ENCODE measurements at regions of chr13 and their contacts with region 1.

Region 1: DNA sequence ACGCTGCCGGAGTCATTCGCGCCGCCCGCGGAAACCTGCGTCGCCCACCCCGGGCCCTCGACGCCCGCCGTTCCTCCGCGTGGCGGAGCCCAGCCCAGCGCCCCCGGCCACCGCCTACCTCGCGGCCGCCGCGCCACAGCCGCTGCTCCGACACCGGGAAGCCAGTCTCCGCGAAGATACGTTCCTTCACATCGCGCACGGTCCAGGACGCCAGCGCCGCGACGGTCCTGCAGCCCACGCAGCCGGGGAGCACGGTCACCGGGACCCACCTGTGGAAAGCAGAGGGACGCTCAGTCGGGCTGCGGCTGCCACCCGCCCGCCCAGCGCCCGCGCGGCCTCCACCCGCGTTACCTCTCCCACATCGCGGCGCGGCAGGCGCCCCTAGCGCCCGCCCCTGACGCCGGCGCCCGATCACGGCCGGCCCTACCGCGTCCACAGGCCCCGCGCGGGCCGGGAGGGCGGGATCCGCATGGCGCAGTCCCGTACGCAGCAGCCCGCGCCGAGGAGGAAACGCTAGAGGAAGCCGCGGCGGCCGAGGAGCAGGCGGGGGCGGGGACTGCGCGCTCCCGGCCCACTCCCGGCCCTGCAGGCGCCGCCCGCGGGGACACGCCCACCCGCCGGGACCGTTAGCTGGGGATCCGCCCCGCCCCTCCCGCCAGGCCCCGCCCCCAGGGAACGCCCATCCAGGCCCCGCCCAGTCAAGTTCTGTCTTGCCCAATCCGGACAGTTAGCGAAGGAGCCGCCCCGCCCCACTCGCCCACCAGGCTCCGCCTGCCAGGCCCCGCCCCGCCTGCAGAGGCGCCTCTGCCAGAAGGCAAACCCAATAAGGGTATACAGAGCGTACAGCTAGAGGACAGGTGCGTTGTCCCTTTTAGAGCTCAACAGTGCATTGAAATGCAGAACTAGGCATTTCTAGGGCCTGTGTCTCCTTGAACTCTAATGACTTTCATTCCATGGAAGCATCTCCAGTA is 58.2 kb downstream of the SACS start:
- DNase-seq: peak; percentile 96
- ATAC-seq: peak; percentile 85
- H3K4me3 ChIP-seq: peak overlapping the region in 4 of 5 experiments; percentile 46 to 69 (median 67)
- H3K4me3 Mint-ChIP-seq: peak overlapping the region; percentile 79
- H3K27ac ChIP-seq: peak overlapping the region; percentile 49 to 51
- H3K27ac Mint-ChIP-seq: peak overlapping the region; percentile 86
- H3K4me1 ChIP-seq: peaks cover 56 to 59% of the 10 kb centered on the region in 2 donors
- H3K4me1 Mint-ChIP-seq: peaks cover 64% of the 10 kb centered on the region
- H3K27me3 ChIP-seq: no peaks in the 10 kb centered on the region
- H3K27me3 Mint-ChIP-seq: no peaks in the 10 kb centered on the region
- CTCF ChIP-seq: peak; percentile 59

Region 2: GRCh38 chr13:21603531-21604448 is 1771.5 kb before region 1 on chr13 and contains the start of gene MICU2:
- CTCF ChIA-PET with region 1: no interaction called
- POLR2A ChIA-PET with region 1: no interaction called
- intact Hi-C with region 1: loop called (anchors 5 kb)
- DNase-seq: peak; percentile 98
- ATAC-seq: peak; percentile 93
- H3K4me3 ChIP-seq: peak within 1 kb of the TSS; percentile 59 to 92 (median 75)
- H3K4me3 Mint-ChIP-seq: peak within 1 kb of the TSS; percentile 95
- H3K27ac ChIP-seq: peak within 1 kb of the TSS; percentile 80 to 98
- H3K27ac Mint-ChIP-seq: peak within 1 kb of the TSS; percentile 98
- H3K4me1 ChIP-seq: peaks cover 17 to 21% of the 10 kb centered on the region in 2 donors
- H3K4me1 Mint-ChIP-seq: peaks cover 35% of the 10 kb centered on the region
- H3K27me3 ChIP-seq: peaks cover 2 to 12% (median 3%) of the 10 kb centered on the region in 4 experiments
- H3K27me3 Mint-ChIP-seq: peaks cover 29% of the 10 kb centered on the region
- CTCF ChIP-seq: no peak
- total RNA-seq, gene MICU2: 52.2 and 52.5 TPM in 2 replicates

Region 3: GRCh38 chr13:23411706-23412105 is 36.4 kb after region 1 on chr13:
- CTCF ChIA-PET with region 1: interaction called, 5 read pairs
- POLR2A ChIA-PET with region 1: no interaction called
- intact Hi-C with region 1: loop called (anchors 1 kb)
- DNase-seq: no peak
- ATAC-seq: no peak
- H3K4me3 ChIP-seq: no peak overlapping the region
- H3K4me3 Mint-ChIP-seq: no peak overlapping the region
- H3K27ac ChIP-seq: no peak overlapping the region
- H3K27ac Mint-ChIP-seq: no peak overlapping the region
- H3K4me1 ChIP-seq: no peaks in the 10 kb centered on the region
- H3K4me1 Mint-ChIP-seq: peaks cover 2% of the 10 kb centered on the region
- H3K27me3 ChIP-seq: peaks cover 0 to 6% (median 3%) of the 10 kb centered on the region in 4 experiments
- H3K27me3 Mint-ChIP-seq: peaks cover 14% of the 10 kb centered on the region
- CTCF ChIP-seq: no peak

Region 4: DNA sequence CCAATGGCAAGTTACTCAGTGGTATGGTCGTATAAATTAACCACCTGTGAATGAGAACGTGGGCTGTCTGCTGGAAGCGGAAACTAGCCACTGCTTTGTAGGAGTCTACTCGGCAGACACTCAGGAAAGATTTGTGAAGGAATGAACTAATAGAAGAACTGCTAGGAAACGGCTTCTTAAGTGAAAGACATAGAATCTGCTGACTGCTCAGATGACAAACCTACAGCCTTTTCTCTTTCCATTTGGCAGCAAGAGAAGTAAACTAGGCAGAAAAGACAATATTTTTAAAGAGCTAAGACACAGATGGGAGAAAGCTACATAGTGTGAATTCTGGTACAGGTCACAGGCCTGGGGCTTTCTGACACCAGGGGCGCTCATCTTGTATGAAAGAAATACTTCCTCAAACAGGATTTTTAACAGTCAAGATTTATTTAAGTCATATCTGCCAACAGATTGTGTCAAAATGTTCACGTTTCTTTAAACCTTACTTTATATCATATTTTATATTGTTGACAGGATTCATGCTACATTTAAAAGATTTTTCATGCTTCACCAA is 435.5 kb after region 1 on chr13:
- CTCF ChIA-PET with region 1: no interaction called
- POLR2A ChIA-PET with region 1: no interaction called
- intact Hi-C with region 1: loop called (anchors 2 kb)
- DNase-seq: peak; percentile 67
- ATAC-seq: peak; percentile 56
- H3K4me3 ChIP-seq: no peak overlapping the region
- H3K4me3 Mint-ChIP-seq: peak overlapping the region; percentile 23
- H3K27ac ChIP-seq: peak overlapping the region in 1 of 2 donors; percentile 50
- H3K27ac Mint-ChIP-seq: peak overlapping the region; percentile 43
- H3K4me1 ChIP-seq: peaks cover 54 to 59% of the 10 kb centered on the region in 2 donors
- H3K4me1 Mint-ChIP-seq: peaks cover 43% of the 10 kb centered on the region
- H3K27me3 ChIP-seq: peaks cover 0 to 2% (median 0%) of the 10 kb centered on the region in 4 experiments
- H3K27me3 Mint-ChIP-seq: no peaks in the 10 kb centered on the region
- CTCF ChIP-seq: peak; percentile 79

Region 5: DNA sequence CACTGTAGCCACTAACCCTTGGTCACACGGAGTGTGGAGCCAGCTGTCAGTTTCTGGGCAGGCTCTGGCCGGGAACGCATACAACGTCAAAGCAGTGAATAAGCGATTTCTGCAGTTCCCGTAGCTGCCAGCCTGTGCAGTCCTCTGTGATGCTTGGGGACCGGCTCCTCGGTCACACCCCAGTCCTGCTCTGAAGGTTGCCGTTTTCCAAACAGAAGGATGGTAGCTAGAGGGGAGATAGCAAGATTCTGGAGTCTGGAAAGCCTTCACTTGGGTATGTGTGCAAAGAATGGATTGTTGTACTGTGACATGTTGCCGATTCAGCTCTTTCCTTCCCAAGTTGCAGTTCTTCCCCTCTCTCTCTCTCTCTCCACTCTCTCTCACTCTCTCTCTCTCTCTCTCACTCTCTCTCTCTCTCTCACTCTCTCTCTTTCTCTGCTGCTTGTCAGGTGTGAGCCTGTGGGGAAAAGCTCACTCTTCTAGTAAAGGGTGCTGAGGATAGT is 895.4 kb after region 1 on chr13:
- CTCF ChIA-PET with region 1: no interaction called
- POLR2A ChIA-PET with region 1: no interaction called
- intact Hi-C with region 1: loop called (anchors 5 kb)
- DNase-seq: peak; percentile 76
- ATAC-seq: peak; percentile 52
- H3K4me3 ChIP-seq: peak overlapping the region; percentile 40 to 71 (median 62)
- H3K4me3 Mint-ChIP-seq: peak overlapping the region; percentile 89
- H3K27ac ChIP-seq: peak overlapping the region; percentile 84 to 89
- H3K27ac Mint-ChIP-seq: peak overlapping the region; percentile 98
- H3K4me1 ChIP-seq: peaks cover 55 to 66% of the 10 kb centered on the region in 2 donors
- H3K4me1 Mint-ChIP-seq: peaks cover 73% of the 10 kb centered on the region
- H3K27me3 ChIP-seq: no peaks in the 10 kb centered on the region
- H3K27me3 Mint-ChIP-seq: no peaks in the 10 kb centered on the region
- CTCF ChIP-seq: peak; percentile 13

Measured in B cell (primary cell).